IMR-90 (cell line): ENCODE measurements at regions of chr10 and their contacts with region 1.

Region 1: GRCh38 chr10:75143353-75143752 is 31.9 kb downstream of the SAMD8 start:
- DNase-seq: peak; percentile 32
- ATAC-seq: no peak
- H3K4me3 ChIP-seq: no peak overlapping the region
- H3K27ac ChIP-seq: no peak overlapping the region; the same call in 1 of the 2 replicates
- H3K4me1 ChIP-seq: no peaks in the 10 kb centered on the region
- H3K27me3 ChIP-seq: no peaks in the 10 kb centered on the region
- CTCF ChIP-seq: no peak
- POLR2A ChIP-seq: no peak
- RAD21 ChIP-seq: no peak

Region 2: GRCh38 chr10:74174521-74174920 is 968.8 kb before region 1 on chr10:
- CTCF ChIA-PET with region 1: no interaction called
- POLR2A ChIA-PET with region 1: interaction called, 17 read pairs
- dilution Hi-C with region 1: no loop called
- in situ Hi-C with region 1: no loop called
- intact Hi-C with region 1: no loop called
- DNase-seq: no peak
- ATAC-seq: no peak
- H3K4me3 ChIP-seq: no peak overlapping the region
- H3K27ac ChIP-seq: no peak overlapping the region
- H3K4me1 ChIP-seq: no peaks in the 10 kb centered on the region; the same call in 1 of the 2 replicates
- H3K27me3 ChIP-seq: no peaks in the 10 kb centered on the region
- CTCF ChIP-seq: no peak
- POLR2A ChIP-seq: no peak
- RAD21 ChIP-seq: no peak

Region 3: DNA sequence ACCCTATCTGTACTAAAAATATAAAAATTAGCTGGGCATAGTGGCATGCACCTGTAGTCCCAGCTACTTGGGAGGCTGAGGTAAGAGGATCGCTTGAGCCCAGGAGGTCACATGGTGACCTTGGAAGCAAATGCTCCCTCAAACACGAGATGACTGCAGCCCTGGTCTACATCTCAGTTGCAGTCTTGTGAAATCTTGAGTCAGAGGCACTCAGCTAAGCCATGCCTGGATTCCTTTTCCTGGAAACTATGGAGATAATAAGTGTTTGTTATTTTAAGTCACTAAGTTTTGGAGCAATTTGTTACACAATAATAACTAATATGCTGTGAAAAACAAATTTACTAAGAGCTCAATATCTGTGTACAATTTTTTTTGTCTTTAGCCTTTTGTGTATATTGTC is 601.3 kb before region 1 on chr10:
- CTCF ChIA-PET with region 1: no interaction called
- POLR2A ChIA-PET with region 1: no interaction called
- dilution Hi-C with region 1: no loop called
- in situ Hi-C with region 1: no loop called
- intact Hi-C with region 1: no loop called
- DNase-seq: peak; percentile 93
- ATAC-seq: peak; percentile 91
- H3K4me3 ChIP-seq: no peak overlapping the region
- H3K27ac ChIP-seq: peak overlapping the region; percentile 58; the same call in 1 of the 2 replicates
- H3K4me1 ChIP-seq: peaks cover 7% of the 10 kb centered on the region; the same call in 1 of the 2 replicates
- H3K27me3 ChIP-seq: no peaks in the 10 kb centered on the region
- CTCF ChIP-seq: no peak
- POLR2A ChIP-seq: no peak
- RAD21 ChIP-seq: no peak